Transverse colon (tissue), 4 donors: ENCODE measurements at regions of chr2 and their contacts with region 1.

Region 1: DNA sequence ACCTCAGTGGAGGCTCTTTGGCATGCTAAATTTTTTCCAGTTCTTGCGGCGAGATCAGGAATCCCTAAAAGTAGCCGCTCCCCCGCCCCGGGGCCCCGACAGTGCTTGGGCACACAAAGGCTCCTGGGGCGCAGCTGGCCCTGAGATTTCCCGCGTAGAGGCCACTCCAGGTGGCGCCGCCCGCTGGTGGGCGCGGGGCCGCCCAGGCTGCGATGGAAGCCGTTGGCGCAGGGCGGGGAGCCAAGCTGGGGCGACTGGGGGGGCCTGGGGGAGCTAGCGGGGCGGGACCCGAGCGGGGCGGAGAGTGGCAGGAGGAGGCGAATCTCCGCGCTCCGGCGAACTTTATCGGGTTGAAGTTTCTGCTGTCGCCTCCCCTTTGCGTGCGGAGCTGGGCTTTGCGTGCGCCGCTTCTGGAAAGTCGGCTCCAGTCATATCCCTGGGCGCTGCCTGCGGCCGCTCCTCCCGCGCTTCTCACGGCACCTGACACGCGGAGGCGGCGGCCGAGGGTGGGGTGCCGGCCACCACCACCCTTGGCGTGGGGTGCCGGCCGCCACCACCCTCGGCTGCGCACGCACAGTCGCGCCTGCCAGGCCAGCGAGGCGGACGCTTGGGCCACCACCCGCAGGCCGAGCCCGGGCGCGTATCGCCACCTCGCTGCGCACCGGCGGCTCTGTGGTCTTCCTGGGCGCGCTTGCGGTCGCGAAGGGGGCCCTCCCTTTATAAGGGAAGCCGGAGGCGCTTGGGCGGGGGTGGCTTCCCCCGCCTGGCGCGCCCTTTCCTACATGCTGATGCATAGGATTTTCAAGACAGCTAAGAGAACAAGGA is 867 bp upstream of the CYP1B1 start:
- DNase-seq: peak; percentile 63
- H3K4me3 ChIP-seq: peak overlapping the region; percentile 43 to 66 (median 46)
- H3K27ac ChIP-seq: peak overlapping the region; percentile 71 to 82 (median 78)
- H3K4me1 ChIP-seq: peaks cover 0 to 41% (median 27%) of the 10 kb centered on the region in 4 donors
- H3K27me3 ChIP-seq: peaks cover 60% of the 10 kb centered on the region
- CTCF ChIP-seq: peak in 4 of 5 experiments; percentile 17 to 47 (median 26)
- EP300 ChIP-seq: peak; percentile 17
- POLR2A ChIP-seq: no peak

Region 2: GRCh38 chr2:38274286-38275276 is 197.8 kb after region 1 on chr2:
- in situ Hi-C with region 1: no loop called
- intact Hi-C with region 1: loop called (anchors 10 kb)
- DNase-seq: no peak
- H3K4me3 ChIP-seq: no peak overlapping the region
- H3K27ac ChIP-seq: no peak overlapping the region
- H3K4me1 ChIP-seq: peaks cover 0 to 13% (median 0%) of the 10 kb centered on the region in 4 donors
- H3K27me3 ChIP-seq: no peaks in the 10 kb centered on the region
- CTCF ChIP-seq: peak; percentile 56 to 78 (median 57)
- EP300 ChIP-seq: no peak
- POLR2A ChIP-seq: no peak